Activated naive CD4-positive, alpha-beta T cell treated with anti-CD3 and anti-CD28 coated beads for 36 hours (primary cell): ENCODE measurements at regions of chr1 and their contacts with region 1.

Region 1: GRCh38 chr1:7534061-7534825 is 236.9 kb upstream of the VAMP3 start:
- DNase-seq: no peak
- H3K4me3 Mint-ChIP-seq: no peak overlapping the region
- H3K27ac Mint-ChIP-seq: no peak overlapping the region
- H3K4me1 Mint-ChIP-seq: no peaks in the 10 kb centered on the region
- H3K27me3 Mint-ChIP-seq: no peaks in the 10 kb centered on the region

Region 2: DNA sequence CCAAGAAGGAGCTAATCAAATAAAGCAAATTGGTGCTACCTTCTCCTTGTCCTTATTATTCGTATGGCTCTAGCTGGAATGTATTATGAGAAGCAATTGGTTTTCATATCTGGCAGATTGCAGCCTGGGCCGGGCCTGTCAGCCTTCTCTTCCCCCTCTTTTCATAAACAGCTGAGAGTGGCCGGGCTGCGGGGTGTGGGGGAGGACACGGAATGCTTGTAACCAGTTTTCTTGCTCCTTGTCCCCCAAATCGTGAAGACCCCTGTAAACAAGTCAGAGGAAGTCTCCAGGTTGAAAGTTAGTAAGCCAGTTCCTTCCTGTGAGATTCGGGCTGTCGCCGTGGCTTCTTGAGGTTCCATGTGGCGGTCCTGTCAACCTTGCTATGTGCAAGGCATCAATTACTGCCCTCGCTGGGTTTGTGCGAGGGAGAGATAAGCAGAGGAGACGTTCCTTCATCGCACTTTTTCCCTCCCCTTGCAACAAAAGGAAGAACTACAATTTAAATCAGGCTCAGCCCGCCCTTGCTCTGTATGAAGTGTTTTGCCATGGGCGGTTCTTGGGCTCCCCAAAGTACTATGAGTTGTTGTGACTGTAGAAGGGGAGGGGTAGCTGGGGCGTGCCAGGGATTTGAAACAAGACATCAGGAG is 298.2 kb before region 1 on chr1:
- CTCF ChIA-PET with region 1: no interaction called
- intact Hi-C with region 1: loop called (anchors 5 kb)
- DNase-seq: no peak
- H3K4me3 Mint-ChIP-seq: no peak overlapping the region
- H3K27ac Mint-ChIP-seq: no peak overlapping the region
- H3K4me1 Mint-ChIP-seq: no peaks in the 10 kb centered on the region
- H3K27me3 Mint-ChIP-seq: peaks cover 24% of the 10 kb centered on the region